Pancreas (tissue), 10 donors: ENCODE measurements at regions of chr10 and their contacts with region 1.

Region 1: DNA sequence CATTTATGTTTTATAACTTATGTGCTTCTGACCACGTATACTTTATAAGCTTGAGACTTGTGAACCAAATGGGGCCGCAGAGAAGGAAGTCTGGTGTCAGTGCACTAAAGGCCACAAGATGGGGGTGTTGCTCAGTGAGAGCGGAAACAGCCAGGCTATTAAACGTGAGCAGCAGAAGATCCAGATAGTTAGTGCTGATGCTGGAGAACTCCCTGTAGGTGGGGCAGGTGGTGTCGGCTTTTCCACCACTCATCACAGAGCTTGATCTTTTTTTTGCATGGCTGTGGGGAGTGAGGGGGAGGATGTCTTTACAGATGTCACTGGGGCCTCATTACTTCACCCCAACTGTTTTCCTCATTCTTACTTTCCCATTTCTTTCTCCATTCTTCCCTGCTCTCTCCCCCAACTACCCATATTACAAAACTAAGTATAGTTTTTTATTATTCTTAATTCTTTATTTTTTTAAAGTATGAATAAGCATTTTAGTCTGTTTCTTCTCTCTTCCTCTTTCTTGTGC is 34.7 kb downstream of the ACADSB start:
- DNase-seq: peak in 1 of 6 donors; percentile 27
- ATAC-seq: peak in 3 of 4 donors; percentile 76 to 88 (median 78)
- H3K4me3 ChIP-seq: no peak overlapping the region
- H3K27ac ChIP-seq: no peak overlapping the region
- H3K4me1 ChIP-seq: no peaks in the 10 kb centered on the region
- H3K27me3 ChIP-seq: no peaks in the 10 kb centered on the region
- CTCF ChIP-seq: peak in 3 of 4 donors; percentile 15 to 51 (median 22)

Region 2: DNA sequence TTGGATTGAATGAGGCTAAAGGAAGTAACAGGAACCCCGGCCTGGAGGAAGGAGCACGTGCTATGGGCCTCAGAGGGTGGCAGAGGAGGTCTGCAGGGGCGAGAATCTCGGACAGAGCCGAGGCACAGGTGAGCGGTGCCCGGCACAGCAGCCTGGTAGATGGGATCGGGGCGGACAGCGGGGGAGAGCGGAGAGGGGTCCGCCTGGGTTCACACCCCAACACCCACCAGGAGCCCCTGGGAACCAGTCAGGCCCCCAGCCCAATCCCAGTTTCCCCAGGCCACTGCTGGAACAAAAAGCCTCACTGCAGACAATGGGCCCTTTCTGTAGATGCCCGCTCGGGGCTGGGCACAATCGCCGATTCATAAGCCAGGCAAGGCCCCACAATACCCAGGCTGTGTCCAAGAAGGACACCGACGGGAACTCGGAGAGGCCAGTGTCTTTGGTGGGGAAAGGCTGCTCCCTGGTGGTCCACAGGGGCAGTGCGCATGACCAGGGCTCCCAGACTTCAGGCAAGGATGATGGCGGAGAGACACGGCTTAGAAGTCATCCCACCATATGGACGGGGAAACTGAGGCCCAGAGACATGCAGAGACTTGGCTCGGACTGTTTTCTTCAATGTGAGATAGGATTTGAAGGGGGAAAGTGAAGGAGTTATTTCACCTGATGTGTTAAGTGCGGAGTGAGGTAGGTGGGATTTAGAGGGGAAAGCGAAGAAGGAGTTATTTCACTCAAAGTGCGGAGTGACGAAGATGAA is 515.8 kb after region 1 on chr10:
- intact Hi-C with region 1: loop called in 2 of 3 experiments (anchors 10 kb)
- DNase-seq: peak; percentile 31 to 91 (median 78)
- ATAC-seq: peak; percentile 80 to 99 (median 96)
- H3K4me3 ChIP-seq: no peak overlapping the region
- H3K27ac ChIP-seq: no peak overlapping the region
- H3K4me1 ChIP-seq: no peaks in the 10 kb centered on the region
- H3K27me3 ChIP-seq: no peaks in the 10 kb centered on the region
- CTCF ChIP-seq: peak; percentile 95 to 99 (median 98)